GM12878 (cell line): ENCODE measurements at regions of chr17 and their contacts with region 1.

Region 1: DNA sequence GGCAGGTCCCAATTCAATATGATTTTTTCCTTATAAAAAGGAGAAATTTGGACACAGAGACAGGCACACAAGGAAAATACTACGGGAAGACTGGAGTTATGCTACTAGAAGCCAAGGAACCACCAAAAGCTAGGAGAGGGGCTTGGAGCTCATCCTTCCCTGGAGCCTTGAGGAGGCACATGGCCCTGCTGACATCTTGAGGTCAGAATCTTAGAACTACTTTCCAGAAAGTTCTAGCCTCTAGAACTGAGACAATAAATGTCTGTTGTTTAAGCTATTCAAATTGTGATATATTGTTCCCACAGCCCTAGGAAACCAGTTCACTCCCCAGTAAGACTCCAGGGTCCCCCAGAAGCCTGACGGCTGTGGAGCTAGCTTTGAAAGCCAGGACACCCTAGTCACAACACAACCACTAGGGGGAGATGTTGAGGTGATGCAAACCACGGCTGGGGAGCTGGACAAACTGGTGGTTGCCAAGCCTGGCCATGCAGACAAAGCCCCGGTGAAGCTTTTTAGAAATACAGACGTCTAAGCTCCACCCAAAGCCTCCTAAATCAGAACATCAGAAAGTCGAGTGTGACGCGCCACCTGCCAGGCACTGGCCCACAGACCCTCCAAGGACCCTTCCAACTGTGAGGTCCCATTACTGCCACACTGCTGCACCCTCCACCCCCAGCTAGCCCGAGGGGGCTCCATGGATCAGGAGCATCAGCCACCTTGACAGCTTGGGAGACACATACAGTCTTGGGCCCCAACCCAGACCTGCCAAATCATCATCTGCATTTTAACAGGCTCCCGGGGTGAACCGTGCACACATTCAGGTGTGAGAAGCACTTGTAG is 106.4 kb downstream of the SLC39A11 start:
- DNase-seq: peak; percentile 47
- ATAC-seq: peak; percentile 99
- H3K4me3 ChIP-seq: no peak overlapping the region
- H3K27ac ChIP-seq: no peak overlapping the region; the same call in 1 of the 2 replicates
- H3K4me1 ChIP-seq: peaks cover 10% of the 10 kb centered on the region
- H3K27me3 ChIP-seq: no peaks in the 10 kb centered on the region
- CTCF ChIP-seq: peak; percentile 84 to 88 (median 88)
- EP300 ChIP-seq: no peak
- POLR2A ChIP-seq: no peak
- RAD21 ChIP-seq: peak; percentile 81

Region 2: GRCh38 chr17:72931163-72931562 is 54.9 kb before region 1 on chr17:
- CTCF ChIA-PET with region 1: interaction called, 9 read pairs
- POLR2A ChIA-PET with region 1: no interaction called
- RAD21 ChIA-PET with region 1: interaction called, 13 read pairs
- SMC1A ChIA-PET with region 1: interaction called, 7 read pairs
- in situ Hi-C with region 1: no loop called
- intact Hi-C with region 1: no loop called
- DNase-seq: peak; percentile 25
- ATAC-seq: peak; percentile 68
- H3K4me3 ChIP-seq: no peak overlapping the region
- H3K27ac ChIP-seq: no peak overlapping the region
- H3K4me1 ChIP-seq: peaks cover 6% of the 10 kb centered on the region; the same call in 1 of the 2 replicates
- H3K27me3 ChIP-seq: no peaks in the 10 kb centered on the region
- CTCF ChIP-seq: no peak
- EP300 ChIP-seq: no peak
- POLR2A ChIP-seq: no peak
- RAD21 ChIP-seq: no peak

Region 3: GRCh38 chr17:72996791-72997190 is 10.7 kb after region 1 on chr17:
- CTCF ChIA-PET with region 1: interaction called, 16 read pairs
- POLR2A ChIA-PET with region 1: no interaction called
- RAD21 ChIA-PET with region 1: interaction called, 3 read pairs
- SMC1A ChIA-PET with region 1: interaction called, 8 read pairs
- in situ Hi-C with region 1: no loop called
- intact Hi-C with region 1: no loop called
- DNase-seq: no peak
- ATAC-seq: no peak
- H3K4me3 ChIP-seq: no peak overlapping the region
- H3K27ac ChIP-seq: no peak overlapping the region
- H3K4me1 ChIP-seq: no peaks in the 10 kb centered on the region
- H3K27me3 ChIP-seq: no peaks in the 10 kb centered on the region
- CTCF ChIP-seq: no peak
- EP300 ChIP-seq: no peak
- POLR2A ChIP-seq: no peak
- RAD21 ChIP-seq: no peak

Region 4: DNA sequence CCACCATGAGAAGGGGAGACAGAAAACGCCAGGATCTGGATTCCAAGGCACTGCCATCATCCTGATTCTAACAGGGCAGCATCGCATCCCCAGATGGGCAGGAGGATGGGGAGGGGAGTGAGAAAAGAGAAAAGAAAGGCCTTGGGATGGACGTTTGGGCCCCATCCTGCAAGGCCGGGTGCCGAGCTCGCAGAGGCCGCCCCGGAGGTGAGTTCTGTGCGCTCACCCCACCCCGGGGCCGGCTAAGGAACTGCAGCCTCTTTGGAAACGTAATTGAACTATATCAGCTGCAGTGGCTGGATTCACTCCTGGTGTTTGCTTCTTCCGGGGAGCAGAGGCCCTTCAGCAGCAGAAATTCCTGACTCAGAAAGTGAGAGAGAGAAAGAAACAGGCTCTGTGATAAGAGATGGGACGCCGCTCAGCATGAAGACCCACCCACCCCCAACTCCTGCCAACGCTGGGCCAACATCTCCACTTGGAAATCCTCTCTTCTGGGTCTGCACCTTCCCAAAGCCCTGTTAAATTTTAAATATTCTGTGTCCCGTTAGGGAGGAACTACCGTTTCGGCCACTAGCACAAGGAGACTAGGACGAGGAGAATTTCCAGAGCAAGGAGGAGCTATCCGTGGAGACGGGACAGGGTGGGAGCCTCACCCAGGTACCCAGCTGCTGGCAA is 170.2 kb after region 1 on chr17:
- CTCF ChIA-PET with region 1: interaction called, 108 read pairs
- POLR2A ChIA-PET with region 1: interaction called, 12 read pairs
- RAD21 ChIA-PET with region 1: interaction called, 82 read pairs
- SMC1A ChIA-PET with region 1: interaction called, 63 read pairs
- in situ Hi-C with region 1: loop called (anchors 5 kb)
- intact Hi-C with region 1: loop called (anchors 1 kb)
- DNase-seq: no peak
- ATAC-seq: peak; percentile 91
- H3K4me3 ChIP-seq: peak overlapping the region; percentile 39; the same call in 1 of the 2 replicates
- H3K27ac ChIP-seq: peak overlapping the region; percentile 80
- H3K4me1 ChIP-seq: peaks cover 40% of the 10 kb centered on the region
- H3K27me3 ChIP-seq: no peaks in the 10 kb centered on the region
- CTCF ChIP-seq: peak; percentile 87 to 88 (median 87)
- EP300 ChIP-seq: no peak
- POLR2A ChIP-seq: no peak
- RAD21 ChIP-seq: peak; percentile 73

Region 5: DNA sequence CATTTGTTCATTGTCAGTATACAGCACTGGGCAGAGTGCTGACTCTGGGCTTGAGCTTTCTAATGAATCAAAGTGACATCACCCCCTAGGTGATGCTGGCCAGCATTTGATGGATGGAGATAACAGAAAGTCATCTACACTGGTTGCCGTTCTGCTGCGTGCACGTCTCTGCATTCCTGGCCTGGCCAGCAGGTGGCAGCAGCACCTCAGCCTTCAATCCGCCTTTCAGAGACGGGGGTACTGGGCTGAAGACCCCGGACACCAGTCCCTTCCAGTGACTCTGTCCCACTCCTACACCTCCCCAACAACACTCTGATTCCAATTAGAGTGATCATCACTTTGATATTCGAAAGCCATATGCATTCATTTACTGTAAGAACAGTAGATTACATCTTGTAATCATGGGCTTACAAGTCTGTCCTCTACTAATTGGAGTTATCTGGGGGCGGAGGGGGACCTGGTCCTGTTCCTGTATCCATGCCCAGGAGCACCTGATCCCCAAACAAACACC is 269.6 kb after region 1 on chr17:
- CTCF ChIA-PET with region 1: interaction called, 12 read pairs
- POLR2A ChIA-PET with region 1: no interaction called
- RAD21 ChIA-PET with region 1: interaction called, 4 read pairs
- SMC1A ChIA-PET with region 1: interaction called, 3 read pairs
- in situ Hi-C with region 1: no loop called
- intact Hi-C with region 1: no loop called
- DNase-seq: no peak
- ATAC-seq: peak; percentile 94
- H3K4me3 ChIP-seq: no peak overlapping the region
- H3K27ac ChIP-seq: no peak overlapping the region
- H3K4me1 ChIP-seq: no peaks in the 10 kb centered on the region
- H3K27me3 ChIP-seq: no peaks in the 10 kb centered on the region
- CTCF ChIP-seq: peak; percentile 95 to 98 (median 97)
- EP300 ChIP-seq: no peak
- POLR2A ChIP-seq: no peak
- RAD21 ChIP-seq: peak; percentile 97